HEK293 (cell line): ENCODE measurements at regions of chr6 and their contacts with region 1.

Region 1: DNA sequence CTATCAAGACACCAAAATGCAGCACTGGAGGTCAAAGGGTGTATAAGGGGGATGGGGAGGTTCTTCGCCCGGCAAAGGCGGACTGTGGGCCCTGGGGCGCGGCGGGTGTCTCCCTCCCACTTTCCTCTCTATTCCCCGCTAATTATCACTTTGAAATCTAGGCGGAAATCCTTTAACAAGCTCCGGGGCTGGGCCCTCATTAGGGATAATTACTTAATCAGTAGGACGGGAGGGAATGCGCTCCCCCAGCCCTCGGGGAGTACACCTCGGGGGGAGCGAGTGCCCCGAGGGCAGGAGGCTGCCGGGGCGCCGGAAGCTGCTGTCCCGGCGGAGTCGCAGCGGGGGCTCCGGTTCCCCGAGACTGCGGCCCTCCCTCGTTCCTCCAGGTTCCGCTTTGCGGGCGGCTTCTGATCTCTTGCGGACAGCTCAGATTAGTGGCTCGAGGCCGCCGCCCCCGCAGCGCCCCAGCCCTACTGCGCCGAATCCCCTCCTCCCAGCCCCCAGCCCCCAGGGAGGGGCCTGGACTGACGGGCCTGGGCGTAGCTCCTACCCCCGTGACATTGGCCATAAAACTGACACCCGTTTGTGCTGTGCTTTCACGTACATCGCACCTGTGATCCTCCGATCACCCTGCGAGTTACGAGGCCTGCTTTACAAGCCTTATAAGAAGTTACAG is 14.7 kb downstream of the MUCL3 start:
- H3K4me3 ChIP-seq: peak overlapping the region; percentile 1; the same call in 1 of the 2 replicates
- H3K27ac ChIP-seq: no peak overlapping the region
- H3K4me1 ChIP-seq: no peaks in the 10 kb centered on the region
- CTCF ChIP-seq: no peak

Region 2: DNA sequence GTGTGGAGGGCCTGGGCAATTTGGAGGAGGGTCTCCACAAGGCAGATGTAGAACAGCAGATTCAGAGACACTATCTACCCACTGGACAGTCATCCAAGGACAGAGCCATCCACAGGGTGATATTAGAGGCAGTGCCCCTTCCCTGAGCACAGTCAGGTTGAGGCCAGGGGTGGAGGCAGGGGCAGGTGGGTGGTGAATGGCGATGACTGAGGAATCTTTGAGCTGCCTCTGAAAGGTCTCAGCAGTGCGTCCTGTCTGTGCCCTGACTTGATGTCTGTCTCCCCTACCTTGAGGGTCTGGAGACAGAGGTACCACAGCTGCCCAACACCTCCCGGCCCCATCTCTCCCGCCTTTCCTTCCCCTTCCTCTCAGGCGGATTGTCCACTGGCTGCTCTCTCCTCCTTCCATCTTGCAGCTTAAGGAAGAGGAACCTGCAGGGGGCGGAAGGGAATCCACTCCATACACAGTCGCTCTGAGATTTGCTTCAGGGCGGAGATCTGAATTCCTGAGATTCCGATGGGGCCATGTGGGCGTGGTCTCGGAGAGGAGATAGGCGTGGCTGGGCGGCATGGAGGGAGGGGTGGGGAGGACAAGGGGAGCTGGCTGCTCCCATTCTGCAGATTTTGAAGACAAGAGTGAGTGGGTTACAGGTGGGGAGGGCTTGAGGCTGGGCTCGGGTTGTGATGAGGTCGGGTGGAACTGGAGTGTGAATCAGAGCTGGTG is 13.0 kb before region 1 on chr6:
- CTCF ChIA-PET with region 1: interaction called, 10 read pairs
- POLR2A ChIA-PET with region 1: interaction called, 4 read pairs
- H3K4me3 ChIP-seq: no peak overlapping the region
- H3K27ac ChIP-seq: no peak overlapping the region
- H3K4me1 ChIP-seq: no peaks in the 10 kb centered on the region; the same call in 1 of the 2 replicates
- CTCF ChIP-seq: peak; percentile 63; the same call in 1 of the 2 replicates

Region 3: GRCh38 chr6:30981942-30982772 is 26.7 kb after region 1 on chr6:
- CTCF ChIA-PET with region 1: no interaction called
- POLR2A ChIA-PET with region 1: no interaction called
- H3K4me3 ChIP-seq: no peak overlapping the region; the same call in 1 of the 2 replicates
- H3K27ac ChIP-seq: no peak overlapping the region
- H3K4me1 ChIP-seq: no peaks in the 10 kb centered on the region
- CTCF ChIP-seq: no peak